ENCODE measurements at regions of chr7 and their contacts with region 1.

Region 1: DNA sequence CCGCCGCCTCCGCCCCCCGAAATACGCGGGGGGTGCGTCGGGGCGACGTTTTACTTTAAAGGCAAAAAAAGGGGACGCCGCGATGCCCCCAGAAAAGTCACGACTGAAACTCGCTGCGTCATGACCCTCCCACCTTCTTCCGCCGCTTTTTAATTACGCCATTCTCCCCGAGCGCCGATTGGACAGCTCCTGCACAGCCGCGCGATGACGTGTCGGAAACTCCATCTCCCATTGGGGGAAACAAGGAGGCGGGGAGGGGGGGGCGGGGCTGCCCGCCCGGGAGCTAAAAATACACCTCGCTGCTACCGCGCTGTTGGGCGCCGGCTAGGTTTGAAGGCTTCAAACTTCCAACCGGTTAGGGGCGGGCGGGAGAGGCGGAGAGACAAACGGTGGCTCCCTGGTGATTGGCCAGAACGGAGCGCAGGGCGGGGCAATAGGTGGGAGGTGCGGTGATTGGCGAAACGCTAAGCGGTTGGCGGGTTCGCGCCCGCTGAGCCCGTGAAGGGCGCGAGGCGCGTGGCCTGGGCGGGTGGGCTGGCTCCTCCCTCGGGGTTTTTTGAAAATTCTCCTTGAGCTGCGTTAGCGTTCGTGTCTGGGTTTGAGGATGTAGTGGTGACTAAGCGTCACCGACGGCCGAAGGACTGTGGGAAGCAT is at the start of gene RHEB:
- DNase-seq: peak; percentile 98
- ATAC-seq: peak; percentile 92
- H3K4me3 ChIP-seq: peak within 1 kb of the TSS; percentile 86 to 99
- H3K27ac ChIP-seq: peak within 1 kb of the TSS; percentile 99
- H3K4me1 ChIP-seq: peaks cover 29% of the 10 kb centered on the region
- H3K27me3 ChIP-seq: no peaks in the 10 kb centered on the region
- CTCF ChIP-seq: no peak
- total RNA-seq, gene RHEB: 259 TPM

Region 2: DNA sequence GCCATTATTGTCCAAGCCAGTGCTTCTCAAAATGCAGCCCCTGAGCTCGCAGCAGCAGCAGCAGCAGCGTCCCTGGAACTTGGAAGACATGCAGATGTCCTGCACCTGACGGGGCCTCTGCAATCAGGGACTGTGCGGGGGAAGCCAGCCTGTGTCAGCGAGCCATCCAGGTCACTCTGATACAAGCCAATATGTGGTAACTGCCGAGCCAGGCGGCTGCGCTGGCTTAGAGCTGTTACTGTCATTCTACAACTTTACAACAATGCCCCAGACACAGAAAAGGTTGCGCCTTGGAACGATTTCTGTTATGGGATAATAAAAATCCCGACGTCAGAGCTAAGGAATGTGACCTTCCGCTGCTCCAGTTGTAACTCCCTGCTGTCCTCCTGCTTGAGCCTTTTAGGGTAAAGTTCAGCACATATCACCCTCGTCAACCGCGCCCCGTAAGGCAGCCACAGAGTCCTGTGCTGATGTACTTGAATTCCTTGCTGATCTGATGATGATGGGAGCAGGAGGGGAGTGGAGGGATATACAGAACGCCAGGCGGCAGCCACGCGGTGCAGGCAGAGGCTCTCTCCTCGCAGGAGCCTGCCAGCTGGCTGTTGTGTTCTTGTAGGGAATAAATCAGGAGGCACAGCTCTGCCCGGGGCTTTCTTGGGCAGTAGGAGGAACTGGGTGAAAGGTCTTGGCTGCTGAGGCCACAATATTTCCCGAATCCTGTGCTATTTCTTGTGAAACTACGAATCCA is 60.0 kb before region 1 on chr7:
- CTCF ChIA-PET with region 1: no interaction called
- POLR2A ChIA-PET with region 1: interaction called, 4 read pairs
- in situ Hi-C with region 1: no loop called
- intact Hi-C with region 1: loop called (anchors 5 kb)
- DNase-seq: peak; percentile 76
- ATAC-seq: peak; percentile 84
- H3K4me3 ChIP-seq: peak overlapping the region; percentile 7 to 45; a peak in 3 of 4 replicates
- H3K27ac ChIP-seq: peak overlapping the region; percentile 98
- H3K4me1 ChIP-seq: peaks cover 50% of the 10 kb centered on the region
- H3K27me3 ChIP-seq: no peaks in the 10 kb centered on the region
- CTCF ChIP-seq: no peak; the same call in 1 of the 2 replicates

Region 3: DNA sequence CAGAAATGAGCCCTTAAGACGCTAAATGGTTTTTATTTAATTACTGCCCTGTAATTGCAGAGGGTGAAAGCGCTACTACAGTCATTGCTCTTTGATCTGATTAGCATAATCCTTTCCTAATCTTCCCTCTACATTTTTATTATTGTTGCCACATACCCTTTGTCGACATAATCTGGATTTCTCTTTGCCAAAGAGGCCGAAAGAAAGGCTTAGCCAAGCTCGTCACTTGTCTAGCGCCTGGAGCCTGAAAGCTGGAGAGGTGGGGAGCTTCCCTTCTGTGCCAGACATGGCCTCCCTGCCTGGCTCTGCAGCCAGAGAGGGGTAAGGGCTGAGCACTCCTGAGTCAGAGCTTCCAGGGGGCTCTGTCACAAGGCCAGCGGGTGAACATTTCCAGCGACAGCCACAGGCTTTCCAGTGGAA is 211.1 kb after region 1 on chr7:
- CTCF ChIA-PET with region 1: no interaction called
- POLR2A ChIA-PET with region 1: interaction called, 14 read pairs
- in situ Hi-C with region 1: no loop called
- intact Hi-C with region 1: no loop called
- DNase-seq: no peak
- ATAC-seq: no peak
- H3K4me3 ChIP-seq: no peak overlapping the region
- H3K27ac ChIP-seq: peak overlapping the region; percentile 52; the same call in 1 of the 2 replicates
- H3K4me1 ChIP-seq: peaks cover 50% of the 10 kb centered on the region
- H3K27me3 ChIP-seq: no peaks in the 10 kb centered on the region
- CTCF ChIP-seq: no peak

Measured in Panc1 (cell line).